HepG2 (cell line): ENCODE measurements at regions of chr19 and their contacts with region 1.

Region 1: DNA sequence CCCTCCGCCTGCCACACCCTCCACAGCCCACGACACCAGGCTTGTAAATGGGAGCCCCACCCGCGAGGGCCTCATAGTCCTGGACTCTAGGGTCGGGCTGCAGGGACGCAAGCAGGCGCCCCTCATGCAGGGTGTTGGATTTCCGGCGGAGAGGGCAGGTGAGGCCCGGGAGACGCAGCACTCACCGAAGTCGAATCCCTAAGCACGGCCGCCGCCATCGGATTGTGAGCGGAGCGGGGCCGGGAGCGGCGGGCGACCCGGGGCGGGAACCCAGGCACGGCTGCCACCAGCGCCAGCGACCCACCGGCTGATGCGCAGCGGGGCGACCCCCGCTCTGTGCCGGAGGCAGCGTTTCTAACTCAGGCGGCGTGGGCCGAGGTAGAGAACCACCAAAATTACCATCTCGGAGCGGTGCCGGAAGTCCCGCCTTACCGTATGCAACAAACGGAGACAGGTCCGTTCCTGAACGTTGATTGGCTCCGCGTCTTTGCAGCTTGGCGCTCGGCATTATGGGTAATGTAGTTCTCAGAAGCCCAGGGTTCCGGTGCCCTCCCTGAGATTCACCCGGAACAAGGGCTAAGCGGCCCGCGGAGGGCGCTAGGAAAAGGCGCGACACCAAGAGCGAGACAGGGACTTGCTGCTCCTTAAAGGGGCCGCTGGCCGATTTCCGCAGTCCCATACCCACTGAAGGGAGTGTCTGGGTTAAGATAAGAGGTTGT is at the start of gene ZNF416:
- DNase-seq: peak; percentile 97
- ATAC-seq: peak; percentile 96
- H3K4me3 ChIP-seq: peak within 1 kb of the TSS; percentile 86 to 95 (median 92)
- H3K27ac ChIP-seq: no peak within 1 kb of the TSS
- H3K4me1 ChIP-seq: peaks cover 16% of the 10 kb centered on the region
- H3K27me3 ChIP-seq: no peaks in the 10 kb centered on the region; a peak in 1 of 5 replicates
- CTCF ChIP-seq: peak; percentile 80
- EP300 ChIP-seq: no peak
- POLR2A ChIP-seq: no peak; a peak in 1 of 4 replicates
- RAD21 ChIP-seq: 0 out of 2 replicates have a peak, but pooled peaks have one; percentile 16
- total RNA-seq, gene ZNF416: 5.3 and 6.6 TPM in 2 replicates

Region 2: GRCh38 chr19:57477191-57478008 is 101.2 kb before region 1 on chr19 and contains the start of gene ZNF772:
- CTCF ChIA-PET with region 1: no interaction called
- POLR2A ChIA-PET with region 1: no interaction called
- in situ Hi-C with region 1: no loop called
- intact Hi-C with region 1: loop called (anchors 2 kb)
- DNase-seq: peak; percentile 95
- ATAC-seq: peak; percentile 99
- H3K4me3 ChIP-seq: peak within 1 kb of the TSS; percentile 72 to 89 (median 89)
- H3K27ac ChIP-seq: peak within 1 kb of the TSS; percentile 67
- H3K4me1 ChIP-seq: peaks cover 32% of the 10 kb centered on the region
- H3K27me3 ChIP-seq: no peaks in the 10 kb centered on the region; a peak in 1 of 5 replicates
- CTCF ChIP-seq: peak; percentile 63
- EP300 ChIP-seq: no peak
- POLR2A ChIP-seq: peak in 1 of 2 experiments; percentile 54; a peak in 2 of 4 replicates
- RAD21 ChIP-seq: 0 out of 2 replicates have a peak, but pooled peaks have one; percentile 3
- total RNA-seq, gene ZNF772: 17.2 and 23.6 TPM in 2 replicates

Region 3: GRCh38 chr19:57566396-57567265 is 12.0 kb before region 1 on chr19:
- CTCF ChIA-PET with region 1: no interaction called
- POLR2A ChIA-PET with region 1: no interaction called
- in situ Hi-C with region 1: no loop called
- intact Hi-C with region 1: no loop called
- DNase-seq: no peak
- ATAC-seq: no peak
- H3K4me3 ChIP-seq: no peak overlapping the region
- H3K27ac ChIP-seq: no peak overlapping the region
- H3K4me1 ChIP-seq: no peaks in the 10 kb centered on the region
- H3K27me3 ChIP-seq: no peaks in the 10 kb centered on the region
- CTCF ChIP-seq: no peak
- EP300 ChIP-seq: no peak
- POLR2A ChIP-seq: no peak
- RAD21 ChIP-seq: no peak

Region 4: DNA sequence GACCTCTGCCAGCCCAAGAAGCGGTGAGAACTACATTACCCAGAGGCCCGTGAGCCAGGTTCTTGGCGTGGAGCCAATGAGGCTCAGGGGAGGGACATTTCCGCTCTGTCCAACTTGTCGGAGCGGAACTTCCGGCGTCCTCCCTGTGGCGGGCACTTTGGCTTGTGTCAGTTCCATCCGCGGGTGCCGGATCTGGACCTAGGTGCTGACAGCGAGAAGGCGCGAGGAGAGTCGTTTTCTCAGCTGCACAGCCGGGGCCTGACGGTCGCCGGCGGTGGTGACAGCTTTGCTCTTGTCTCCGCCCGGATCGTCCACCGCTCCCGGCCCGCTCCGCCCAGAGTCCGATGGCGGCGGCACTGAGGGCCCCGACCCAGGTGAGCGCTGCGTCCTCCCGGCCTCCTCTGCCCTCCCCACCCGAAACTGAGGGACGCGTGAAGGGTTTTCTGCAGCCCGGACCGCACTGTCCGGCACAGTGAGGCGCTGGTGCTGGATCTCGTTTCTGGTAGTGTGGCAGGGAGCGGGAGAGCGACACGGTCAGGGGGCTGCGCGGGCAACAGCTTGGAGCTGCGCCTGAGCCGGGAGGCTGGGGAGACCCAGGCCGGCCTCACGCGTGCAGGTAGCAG is 21.2 kb after region 1 on chr19 and contains the start of gene ZNF530:
- CTCF ChIA-PET with region 1: no interaction called
- POLR2A ChIA-PET with region 1: no interaction called
- in situ Hi-C with region 1: no loop called
- intact Hi-C with region 1: loop called (anchors 2 kb)
- DNase-seq: peak; percentile 91
- ATAC-seq: peak; percentile 99
- H3K4me3 ChIP-seq: peak within 1 kb of the TSS; percentile 73 to 89 (median 80)
- H3K27ac ChIP-seq: peak within 1 kb of the TSS; percentile 14
- H3K4me1 ChIP-seq: peaks cover 19% of the 10 kb centered on the region
- H3K27me3 ChIP-seq: no peaks in the 10 kb centered on the region
- CTCF ChIP-seq: peak; percentile 34
- EP300 ChIP-seq: 0 out of 4 replicates have a peak, but pooled peaks of 1 of the 2 experiments have one; percentile 12
- POLR2A ChIP-seq: peak in 1 of 2 experiments; percentile 44; a peak in 1 of 4 replicates
- RAD21 ChIP-seq: no peak
- total RNA-seq, gene ZNF530: 7.5 and 7.8 TPM in 2 replicates

Region 5: DNA sequence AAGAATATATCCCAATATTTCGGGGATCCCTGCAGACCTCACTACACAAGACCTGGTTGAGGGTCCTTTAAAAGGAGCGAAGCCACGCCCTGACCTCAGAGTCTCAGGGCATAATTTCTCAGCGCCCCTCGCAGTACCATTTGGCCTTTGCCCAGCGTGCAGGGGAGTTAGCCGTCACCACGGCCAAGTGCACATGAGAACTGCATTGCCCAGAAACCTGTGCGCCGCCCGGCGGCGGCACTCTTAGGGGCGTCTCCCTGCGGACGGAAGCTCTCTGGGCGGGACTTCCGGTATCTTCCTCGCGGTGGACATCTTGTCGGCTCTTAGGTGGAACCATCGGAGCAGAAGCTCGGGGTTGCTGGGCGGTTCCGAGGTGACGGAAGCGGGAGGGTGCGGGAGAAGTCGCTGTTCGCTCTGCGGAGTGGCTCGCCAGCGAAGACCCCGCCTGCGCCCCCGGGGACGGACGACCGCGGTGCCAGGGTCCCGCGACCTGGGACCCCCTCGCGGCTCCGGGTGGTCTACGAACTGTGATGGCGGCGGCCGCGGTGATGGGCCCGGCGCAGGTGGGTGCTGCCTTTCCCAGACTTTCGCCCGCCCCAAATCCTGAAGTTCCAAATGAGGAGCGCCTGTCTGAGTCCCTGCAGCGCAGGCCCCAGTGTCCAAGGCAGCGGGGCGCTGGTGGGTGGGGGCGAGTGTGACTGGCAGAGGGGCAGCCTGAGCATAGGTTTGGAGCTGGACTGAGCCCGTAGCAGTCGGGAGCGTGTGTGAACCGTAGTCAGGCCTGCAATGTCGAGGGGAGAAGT is 35.5 kb after region 1 on chr19 and contains the start of gene ZNF134:
- CTCF ChIA-PET with region 1: no interaction called
- POLR2A ChIA-PET with region 1: no interaction called
- in situ Hi-C with region 1: no loop called
- intact Hi-C with region 1: loop called (anchors 1 kb)
- DNase-seq: peak; percentile 87
- ATAC-seq: peak; percentile 99
- H3K4me3 ChIP-seq: peak within 1 kb of the TSS; percentile 92 to 97 (median 97)
- H3K27ac ChIP-seq: peak within 1 kb of the TSS; percentile 59
- H3K4me1 ChIP-seq: peaks cover 42% of the 10 kb centered on the region
- H3K27me3 ChIP-seq: no peaks in the 10 kb centered on the region; a peak in 1 of 5 replicates
- CTCF ChIP-seq: peak; percentile 43
- EP300 ChIP-seq: no peak
- POLR2A ChIP-seq: peak; percentile 69 to 73
- RAD21 ChIP-seq: no peak; the same call in 1 of the 2 replicates
- total RNA-seq, gene ZNF134: 17.1 and 19.4 TPM in 2 replicates

Region 6: DNA sequence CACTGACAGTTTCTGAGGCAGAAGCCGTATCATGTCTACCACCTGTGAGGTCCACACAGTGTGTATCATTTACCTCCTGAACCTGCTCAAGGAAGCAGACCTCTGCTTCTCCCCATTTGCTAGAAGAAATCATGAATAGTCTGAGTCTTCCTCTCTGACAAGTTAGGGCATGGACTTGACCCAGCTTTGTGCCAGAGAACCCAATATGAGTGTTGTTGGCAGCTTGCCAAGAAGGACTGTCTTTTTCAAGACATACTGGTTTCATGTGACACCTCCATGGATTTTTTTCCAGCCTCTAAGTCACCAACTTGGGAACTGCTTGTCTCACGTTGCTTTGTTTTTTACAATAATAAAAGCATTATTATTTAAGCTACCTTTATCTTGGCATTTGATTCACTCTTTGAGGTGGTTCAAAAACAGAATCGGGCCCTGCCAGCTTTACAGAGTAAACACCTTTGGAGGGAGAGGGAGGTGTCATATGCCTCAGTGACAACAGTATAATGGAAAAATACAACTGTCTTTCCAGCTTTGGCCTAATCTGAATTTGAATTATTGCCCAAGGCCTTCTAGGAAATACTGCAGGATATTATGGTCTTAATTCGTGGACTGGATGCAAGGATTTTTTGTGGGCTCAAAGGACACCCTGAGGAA is 63.9 kb after region 1 on chr19:
- CTCF ChIA-PET with region 1: no interaction called
- POLR2A ChIA-PET with region 1: no interaction called
- in situ Hi-C with region 1: no loop called
- intact Hi-C with region 1: no loop called
- DNase-seq: no peak
- ATAC-seq: no peak
- H3K4me3 ChIP-seq: no peak overlapping the region
- H3K27ac ChIP-seq: no peak overlapping the region
- H3K4me1 ChIP-seq: no peaks in the 10 kb centered on the region
- H3K27me3 ChIP-seq: no peaks in the 10 kb centered on the region
- CTCF ChIP-seq: no peak
- EP300 ChIP-seq: no peak
- POLR2A ChIP-seq: no peak
- RAD21 ChIP-seq: no peak

Region 7: GRCh38 chr19:57746580-57747471 is 168.2 kb after region 1 on chr19 and contains the start of gene ZNF776:
- CTCF ChIA-PET with region 1: no interaction called
- POLR2A ChIA-PET with region 1: no interaction called
- in situ Hi-C with region 1: no loop called
- intact Hi-C with region 1: loop called (anchors 2 kb)
- DNase-seq: peak; percentile 88
- ATAC-seq: peak; percentile 99
- H3K4me3 ChIP-seq: peak within 1 kb of the TSS; percentile 87 to 100 (median 99)
- H3K27ac ChIP-seq: peak within 1 kb of the TSS; percentile 89
- H3K4me1 ChIP-seq: peaks cover 33% of the 10 kb centered on the region
- H3K27me3 ChIP-seq: no peaks in the 10 kb centered on the region; a peak in 1 of 5 replicates
- CTCF ChIP-seq: peak; percentile 18; the same call in 1 of the 2 replicates
- EP300 ChIP-seq: no peak
- POLR2A ChIP-seq: peak; percentile 73 to 86; a peak in 3 of 4 replicates
- RAD21 ChIP-seq: no peak; the same call in 1 of the 2 replicates
- total RNA-seq, gene ZNF776: 15.6 and 16.9 TPM in 2 replicates